ENCODE measurements at regions of chr12 and their contacts with region 1.

Region 1: DNA sequence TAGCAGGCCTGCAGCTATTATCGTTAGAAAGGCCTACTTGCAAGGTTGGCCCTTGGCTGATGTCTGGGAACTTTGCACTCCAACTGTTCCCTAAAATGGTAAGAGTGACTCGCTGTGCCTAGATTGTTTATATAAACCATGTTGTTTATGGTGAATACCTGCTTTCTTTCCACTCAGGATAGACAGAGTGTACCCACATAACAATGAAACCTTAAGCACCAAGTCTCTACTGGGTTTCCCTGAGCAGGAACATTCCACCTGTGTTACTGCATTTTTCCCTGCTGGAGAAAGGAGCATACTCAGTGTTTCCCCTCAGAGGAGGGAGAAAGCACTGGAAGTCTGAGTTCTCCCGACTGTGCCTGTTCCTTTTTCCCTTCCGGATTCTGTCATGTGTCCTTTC is 32.8 kb downstream of the ERP29 start:
- DNase-seq: no peak
- ATAC-seq: no peak
- H3K4me3 ChIP-seq: no peak overlapping the region
- H3K4me3 Mint-ChIP-seq: no peak overlapping the region
- H3K27ac ChIP-seq: no peak overlapping the region
- H3K27ac Mint-ChIP-seq: no peak overlapping the region
- H3K4me1 ChIP-seq: no peaks in the 10 kb centered on the region
- H3K4me1 Mint-ChIP-seq: no peaks in the 10 kb centered on the region
- H3K27me3 ChIP-seq: no peaks in the 10 kb centered on the region
- H3K27me3 Mint-ChIP-seq: no peaks in the 10 kb centered on the region
- CTCF ChIP-seq: no peak

Region 2: DNA sequence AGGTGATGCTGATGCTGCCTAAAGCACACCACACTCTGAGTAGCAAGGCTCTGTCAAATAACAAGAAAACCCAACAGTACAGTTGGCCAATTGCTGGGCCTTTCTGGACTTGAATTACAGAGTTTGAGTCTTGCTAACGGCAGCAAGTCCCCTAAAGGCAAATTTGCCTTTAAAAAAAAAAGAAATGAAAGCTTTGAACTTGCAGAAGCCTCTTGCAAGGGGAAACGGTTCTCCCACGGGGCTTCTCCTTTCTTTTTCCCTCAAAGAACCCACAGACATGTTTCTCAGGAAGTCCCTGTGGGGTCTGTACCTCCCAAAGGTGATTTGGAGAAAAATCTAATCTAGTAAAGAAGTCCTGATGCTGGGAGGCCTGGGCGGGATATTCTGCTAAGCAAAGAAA is 934.3 kb before region 1 on chr12:
- CTCF ChIA-PET with region 1: no interaction called
- POLR2A ChIA-PET with region 1: no interaction called
- intact Hi-C with region 1: no loop called
- DNase-seq: no peak
- ATAC-seq: no peak
- H3K4me3 ChIP-seq: no peak overlapping the region
- H3K4me3 Mint-ChIP-seq: no peak overlapping the region
- H3K27ac ChIP-seq: no peak overlapping the region
- H3K27ac Mint-ChIP-seq: no peak overlapping the region
- H3K4me1 ChIP-seq: no peaks in the 10 kb centered on the region
- H3K4me1 Mint-ChIP-seq: peaks cover 9% of the 10 kb centered on the region
- H3K27me3 ChIP-seq: no peaks in the 10 kb centered on the region
- H3K27me3 Mint-ChIP-seq: no peaks in the 10 kb centered on the region
- CTCF ChIP-seq: no peak

Region 3: GRCh38 chr12:112087055-112087850 is 41.2 kb after region 1 on chr12:
- CTCF ChIA-PET with region 1: no interaction called
- POLR2A ChIA-PET with region 1: no interaction called
- intact Hi-C with region 1: loop called in 1 of 2 experiments (anchors 5 kb)
- DNase-seq: no peak
- ATAC-seq: no peak
- H3K4me3 ChIP-seq: no peak overlapping the region
- H3K4me3 Mint-ChIP-seq: no peak overlapping the region
- H3K27ac ChIP-seq: no peak overlapping the region
- H3K27ac Mint-ChIP-seq: no peak overlapping the region
- H3K4me1 ChIP-seq: no peaks in the 10 kb centered on the region
- H3K4me1 Mint-ChIP-seq: peaks cover 10% of the 10 kb centered on the region
- H3K27me3 ChIP-seq: no peaks in the 10 kb centered on the region
- H3K27me3 Mint-ChIP-seq: no peaks in the 10 kb centered on the region
- CTCF ChIP-seq: no peak

Region 4: DNA sequence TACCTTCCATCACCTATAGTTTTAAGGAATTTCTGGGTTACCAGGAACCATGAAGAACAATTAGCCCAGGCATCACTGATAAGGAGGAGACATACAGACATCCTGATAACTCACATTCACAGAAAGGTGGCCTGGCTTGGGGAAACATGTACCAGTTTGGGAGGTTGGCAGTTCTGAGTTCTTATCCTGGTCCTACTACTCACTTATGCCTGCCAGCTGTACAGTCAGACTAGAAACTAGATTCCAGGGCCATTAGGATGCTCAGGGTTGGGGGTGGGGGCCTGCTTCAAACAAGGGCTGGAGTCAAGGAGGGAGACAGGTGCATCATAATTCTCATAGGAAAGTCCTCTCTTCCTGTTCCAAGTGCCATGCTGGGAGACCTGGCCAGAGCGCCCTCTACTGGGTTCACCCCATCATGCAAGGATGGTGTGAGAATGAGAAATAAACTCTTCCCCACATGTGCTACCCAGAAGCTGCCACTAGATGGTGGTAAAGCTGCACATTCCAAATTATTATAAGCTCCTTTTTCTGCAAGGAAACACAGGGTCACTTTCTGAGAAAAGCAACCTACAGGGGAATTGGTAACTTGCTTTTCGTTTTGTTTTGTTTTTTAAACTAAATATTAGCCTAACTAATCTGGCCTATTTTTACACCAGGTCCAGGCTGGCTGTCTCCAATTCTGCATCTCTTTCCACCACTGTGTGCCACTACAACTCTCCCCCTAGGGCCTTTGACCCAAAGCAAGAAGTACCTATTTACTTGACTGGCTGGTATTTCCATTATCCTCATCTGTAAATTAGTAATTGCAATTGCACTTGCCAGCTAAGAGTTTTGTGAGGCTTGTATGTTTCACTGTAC is 946.8 kb after region 1 on chr12:
- CTCF ChIA-PET with region 1: no interaction called
- POLR2A ChIA-PET with region 1: no interaction called
- intact Hi-C with region 1: no loop called
- DNase-seq: peak; percentile 16 to 76 (median 56)
- ATAC-seq: peak; percentile 87
- H3K4me3 ChIP-seq: no peak overlapping the region
- H3K4me3 Mint-ChIP-seq: no peak overlapping the region
- H3K27ac ChIP-seq: no peak overlapping the region
- H3K27ac Mint-ChIP-seq: peak overlapping the region; percentile 7
- H3K4me1 ChIP-seq: peaks cover 6% of the 10 kb centered on the region
- H3K4me1 Mint-ChIP-seq: peaks cover 25% of the 10 kb centered on the region
- H3K27me3 ChIP-seq: no peaks in the 10 kb centered on the region
- H3K27me3 Mint-ChIP-seq: no peaks in the 10 kb centered on the region
- CTCF ChIP-seq: peak; percentile 74